Activated T-helper 2 cell treated with anti-CD3 and anti-CD28 coated beads, Interferon-gamma antibody, Interleukin-2, Interleukin-4, amounts not matched to agents 10 μg/mL and 5 μg/mL and 100 μg/mL, durations not matched to agents 14 hours and 24 hours and 36 hours (primary cell): ENCODE measurements at regions of chr3 and their contacts with region 1.

Region 1: DNA sequence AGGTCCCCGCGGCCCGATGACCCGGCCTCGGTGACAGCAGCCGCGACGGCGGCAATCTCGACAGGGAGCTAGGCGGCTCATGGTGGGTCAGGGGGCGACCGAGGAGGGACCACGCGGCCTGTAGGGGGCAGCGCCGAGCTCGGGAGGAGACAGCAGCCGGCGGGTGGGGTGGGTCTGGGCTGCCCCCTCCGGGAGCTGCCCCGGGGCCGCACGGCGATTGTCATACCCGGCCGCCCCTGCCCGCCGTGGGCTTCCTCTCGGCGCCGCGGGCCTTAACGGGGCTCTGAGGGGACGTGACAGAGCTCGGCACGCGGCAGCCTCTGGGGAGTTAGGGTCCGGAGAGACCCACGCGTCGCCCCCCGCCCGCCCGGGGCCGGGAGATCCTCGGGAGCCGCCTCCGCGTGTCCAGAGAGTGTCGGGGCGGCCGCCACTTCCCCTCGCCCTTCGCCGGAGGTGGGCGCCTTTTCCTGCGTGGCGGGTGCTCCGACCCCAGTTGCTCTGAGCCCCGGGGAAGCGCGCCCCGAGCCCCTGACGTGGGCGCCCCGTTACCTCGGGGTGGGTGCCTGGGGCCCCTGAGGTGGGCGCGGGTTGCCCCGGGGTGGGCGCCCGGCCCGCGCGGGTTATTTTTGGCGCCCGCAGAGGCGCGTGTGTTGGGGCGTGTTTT is 539 bp upstream of the PLCL2 start:
- DNase-seq: peak; percentile 57
- H3K4me3 Mint-ChIP-seq: peak overlapping the region; percentile 93
- H3K27ac Mint-ChIP-seq: peak overlapping the region; percentile 97
- H3K4me1 Mint-ChIP-seq: peaks cover 35% of the 10 kb centered on the region
- H3K27me3 Mint-ChIP-seq: peaks cover 17% of the 10 kb centered on the region

Region 2: DNA sequence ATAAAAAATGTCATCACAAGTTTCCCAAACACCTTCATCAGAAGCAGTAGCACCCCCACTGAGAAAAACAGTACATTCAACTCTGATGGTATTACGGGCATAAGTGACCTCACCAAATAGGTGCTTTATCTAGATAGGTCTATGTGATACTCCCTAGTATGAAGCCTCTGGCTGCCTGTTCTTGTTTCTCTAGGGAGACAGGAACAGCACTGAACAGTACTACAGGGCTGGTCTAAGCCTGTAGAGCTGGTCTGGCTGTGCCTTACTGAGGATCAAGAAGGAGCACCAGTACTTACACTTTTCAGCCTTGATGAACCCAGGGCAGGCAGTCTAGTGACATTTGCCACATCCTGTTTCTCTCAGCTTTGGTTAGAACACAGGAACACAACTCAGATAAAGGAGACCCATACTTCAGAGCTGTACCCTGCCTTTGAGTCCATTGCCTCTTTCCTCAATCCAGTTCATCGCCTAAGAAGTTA is 583.3 kb before region 1 on chr3:
- intact Hi-C with region 1: loop called (anchors 5 kb)
- DNase-seq: peak; percentile 58
- H3K4me3 Mint-ChIP-seq: peak overlapping the region; percentile 82
- H3K27ac Mint-ChIP-seq: peak overlapping the region; percentile 94
- H3K4me1 Mint-ChIP-seq: peaks cover 85% of the 10 kb centered on the region
- H3K27me3 Mint-ChIP-seq: no peaks in the 10 kb centered on the region

Region 3: GRCh38 chr3:16828815-16829214 is 55.4 kb before region 1 on chr3:
- intact Hi-C with region 1: loop called (anchors 10 kb)
- DNase-seq: peak; percentile 28
- H3K4me3 Mint-ChIP-seq: no peak overlapping the region
- H3K27ac Mint-ChIP-seq: no peak overlapping the region
- H3K4me1 Mint-ChIP-seq: peaks cover 18% of the 10 kb centered on the region
- H3K27me3 Mint-ChIP-seq: peaks cover 30% of the 10 kb centered on the region

Region 4: DNA sequence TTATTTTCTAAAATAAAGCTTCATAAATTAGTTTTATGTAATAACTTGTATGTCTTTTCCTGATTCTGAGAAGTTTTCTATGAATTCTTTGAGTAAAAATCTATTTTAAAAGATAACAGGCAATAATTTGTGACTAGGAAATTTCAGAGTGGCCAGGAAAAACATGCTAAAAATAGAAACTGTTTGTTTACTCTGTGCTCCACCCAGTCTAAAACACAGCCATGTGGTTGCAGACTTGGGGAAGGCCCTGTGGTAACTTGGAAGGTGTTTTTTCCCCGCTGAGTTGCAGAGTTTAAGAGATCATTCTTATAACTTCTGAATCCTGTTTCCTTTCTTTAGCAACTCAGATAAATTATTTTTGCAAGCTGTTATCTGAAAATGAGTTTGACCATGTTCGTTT is 22.5 kb after region 1 on chr3:
- intact Hi-C with region 1: loop called (anchors 2 kb)
- DNase-seq: no peak
- H3K4me3 Mint-ChIP-seq: no peak overlapping the region
- H3K27ac Mint-ChIP-seq: no peak overlapping the region
- H3K4me1 Mint-ChIP-seq: peaks cover 60% of the 10 kb centered on the region
- H3K27me3 Mint-ChIP-seq: no peaks in the 10 kb centered on the region

Region 5: DNA sequence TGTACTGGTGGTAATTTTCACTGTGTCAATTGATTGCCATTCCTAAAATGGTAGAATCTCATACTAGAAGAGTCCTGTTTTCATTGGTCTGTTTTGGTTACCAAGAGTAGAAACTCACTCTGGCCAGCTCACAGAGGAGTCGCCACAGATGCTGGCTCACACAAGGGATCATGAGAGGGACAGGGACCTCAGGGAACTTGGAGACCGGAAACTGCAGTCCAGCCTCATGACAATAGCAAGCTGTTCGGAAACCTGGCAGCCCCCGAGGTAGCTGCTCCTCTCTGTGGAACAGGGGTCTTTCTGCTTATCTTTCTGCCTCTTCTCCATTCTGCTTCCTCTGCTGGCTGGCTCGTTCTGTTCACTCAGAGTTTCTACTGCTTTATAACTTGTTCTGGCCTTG is 193.4 kb after region 1 on chr3:
- intact Hi-C with region 1: loop called (anchors 5 kb)
- DNase-seq: no peak
- H3K4me3 Mint-ChIP-seq: no peak overlapping the region
- H3K27ac Mint-ChIP-seq: peak overlapping the region; percentile 29
- H3K4me1 Mint-ChIP-seq: peaks cover 61% of the 10 kb centered on the region
- H3K27me3 Mint-ChIP-seq: no peaks in the 10 kb centered on the region

Region 6: GRCh38 chr3:17110660-17111396 is 226.6 kb after region 1 on chr3:
- intact Hi-C with region 1: no loop called
- DNase-seq: no peak
- H3K4me3 Mint-ChIP-seq: no peak overlapping the region
- H3K27ac Mint-ChIP-seq: no peak overlapping the region
- H3K4me1 Mint-ChIP-seq: peaks cover 23% of the 10 kb centered on the region
- H3K27me3 Mint-ChIP-seq: no peaks in the 10 kb centered on the region

Region 7: GRCh38 chr3:17233398-17233800 is 349.2 kb after region 1 on chr3:
- intact Hi-C with region 1: loop called (anchors 1 kb)
- DNase-seq: peak; percentile 27
- H3K4me3 Mint-ChIP-seq: no peak overlapping the region
- H3K27ac Mint-ChIP-seq: no peak overlapping the region
- H3K4me1 Mint-ChIP-seq: peaks cover 18% of the 10 kb centered on the region
- H3K27me3 Mint-ChIP-seq: no peaks in the 10 kb centered on the region